GM13976 (cell line): ENCODE measurements at regions of chr16 and their contacts with region 1.

Region 1: DNA sequence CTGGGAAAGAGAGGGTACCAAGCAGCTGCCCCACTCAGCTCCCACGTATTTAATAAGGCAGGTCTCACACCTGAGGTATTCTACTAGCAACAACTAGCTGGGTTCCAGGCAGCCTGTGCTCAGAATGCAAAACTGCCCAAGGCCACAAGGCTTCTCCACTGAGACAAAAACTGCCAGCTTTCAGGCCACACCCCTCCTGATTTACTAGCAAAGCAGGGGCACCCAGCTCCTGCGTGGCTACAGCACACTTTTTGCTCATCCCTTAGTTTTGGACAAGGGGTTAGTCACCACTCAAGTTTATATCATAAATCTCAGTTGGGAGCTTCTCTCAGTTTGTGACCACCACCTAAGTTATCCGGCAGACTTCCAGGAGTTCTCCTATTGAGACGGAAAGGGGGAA is 494.6 kb downstream of the CDH11 start:
- DNase-seq: no peak
- CTCF ChIP-seq: no peak

Region 2: DNA sequence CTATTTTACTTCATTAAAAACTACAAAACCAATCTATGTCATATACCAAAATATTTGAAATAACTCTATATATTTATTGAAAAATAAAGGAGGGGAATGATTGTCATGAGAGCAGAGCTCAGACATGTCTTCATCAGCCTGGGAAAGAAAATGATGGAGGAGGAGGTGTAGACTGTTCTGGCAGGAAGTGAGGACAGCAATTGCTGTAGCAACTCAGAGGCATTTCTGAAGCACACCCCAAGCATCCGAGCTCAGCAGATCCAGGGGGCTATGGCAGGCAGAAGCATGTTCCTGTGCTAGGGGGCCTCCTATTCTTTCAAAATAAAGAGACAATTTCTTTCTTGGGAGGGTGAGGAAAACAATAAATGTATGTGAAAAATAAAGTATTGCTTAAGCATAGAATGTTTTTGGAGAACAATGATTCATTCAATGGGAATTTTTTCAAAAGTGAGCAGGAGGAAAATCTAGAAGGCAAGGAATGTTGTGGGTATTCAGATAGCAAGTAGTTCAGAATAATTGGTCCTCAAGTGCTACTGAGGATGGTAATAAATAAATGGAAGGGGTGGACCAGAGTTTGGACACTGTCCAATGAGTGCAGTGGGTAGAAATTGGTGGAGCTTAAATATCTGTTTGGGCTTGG is 111.2 kb after region 1 on chr16:
- in situ Hi-C with region 1: loop called (anchors 25 kb)
- DNase-seq: no peak
- CTCF ChIP-seq: no peak